ENCODE measurements at regions of chr3 and their contacts with region 1.

Region 1: GRCh38 chr3:118997190-118997589 is 37.5 kb downstream of the IGSF11 start:
- DNase-seq: no peak
- ATAC-seq: no peak
- H3K4me3 ChIP-seq: no peak overlapping the region
- H3K4me3 Mint-ChIP-seq: no peak overlapping the region
- H3K27ac ChIP-seq: no peak overlapping the region
- H3K27ac Mint-ChIP-seq: no peak overlapping the region
- H3K4me1 ChIP-seq: no peaks in the 10 kb centered on the region
- H3K4me1 Mint-ChIP-seq: no peaks in the 10 kb centered on the region
- H3K27me3 ChIP-seq: no peaks in the 10 kb centered on the region
- H3K27me3 Mint-ChIP-seq: no peaks in the 10 kb centered on the region

Region 2: GRCh38 chr3:118973050-118973449 is 24.1 kb before region 1 on chr3:
- CTCF ChIA-PET with region 1: no interaction called
- POLR2A ChIA-PET with region 1: no interaction called
- DNase-seq: no peak
- ATAC-seq: no peak
- H3K4me3 ChIP-seq: no peak overlapping the region
- H3K4me3 Mint-ChIP-seq: no peak overlapping the region
- H3K27ac ChIP-seq: no peak overlapping the region
- H3K27ac Mint-ChIP-seq: no peak overlapping the region
- H3K4me1 ChIP-seq: no peaks in the 10 kb centered on the region
- H3K4me1 Mint-ChIP-seq: peaks cover 4 to 7% (median 5%) of the 10 kb centered on the region in 3 donors
- H3K27me3 ChIP-seq: no peaks in the 10 kb centered on the region
- H3K27me3 Mint-ChIP-seq: no peaks in the 10 kb centered on the region

Region 3: GRCh38 chr3:119388577-119388976 is 391.4 kb after region 1 on chr3:
- CTCF ChIA-PET with region 1: no interaction called
- POLR2A ChIA-PET with region 1: interaction called in 1 of 2 experiments, 14 read pairs
- DNase-seq: no peak
- ATAC-seq: no peak
- H3K4me3 ChIP-seq: no peak overlapping the region
- H3K4me3 Mint-ChIP-seq: no peak overlapping the region
- H3K27ac ChIP-seq: no peak overlapping the region
- H3K27ac Mint-ChIP-seq: no peak overlapping the region
- H3K4me1 ChIP-seq: no peaks in the 10 kb centered on the region
- H3K4me1 Mint-ChIP-seq: no peaks in the 10 kb centered on the region
- H3K27me3 ChIP-seq: no peaks in the 10 kb centered on the region
- H3K27me3 Mint-ChIP-seq: no peaks in the 10 kb centered on the region

Measured in T-cell (primary cell).